H1 (cell line): ENCODE measurements at regions of chr16 and their contacts with region 1.

Region 1: DNA sequence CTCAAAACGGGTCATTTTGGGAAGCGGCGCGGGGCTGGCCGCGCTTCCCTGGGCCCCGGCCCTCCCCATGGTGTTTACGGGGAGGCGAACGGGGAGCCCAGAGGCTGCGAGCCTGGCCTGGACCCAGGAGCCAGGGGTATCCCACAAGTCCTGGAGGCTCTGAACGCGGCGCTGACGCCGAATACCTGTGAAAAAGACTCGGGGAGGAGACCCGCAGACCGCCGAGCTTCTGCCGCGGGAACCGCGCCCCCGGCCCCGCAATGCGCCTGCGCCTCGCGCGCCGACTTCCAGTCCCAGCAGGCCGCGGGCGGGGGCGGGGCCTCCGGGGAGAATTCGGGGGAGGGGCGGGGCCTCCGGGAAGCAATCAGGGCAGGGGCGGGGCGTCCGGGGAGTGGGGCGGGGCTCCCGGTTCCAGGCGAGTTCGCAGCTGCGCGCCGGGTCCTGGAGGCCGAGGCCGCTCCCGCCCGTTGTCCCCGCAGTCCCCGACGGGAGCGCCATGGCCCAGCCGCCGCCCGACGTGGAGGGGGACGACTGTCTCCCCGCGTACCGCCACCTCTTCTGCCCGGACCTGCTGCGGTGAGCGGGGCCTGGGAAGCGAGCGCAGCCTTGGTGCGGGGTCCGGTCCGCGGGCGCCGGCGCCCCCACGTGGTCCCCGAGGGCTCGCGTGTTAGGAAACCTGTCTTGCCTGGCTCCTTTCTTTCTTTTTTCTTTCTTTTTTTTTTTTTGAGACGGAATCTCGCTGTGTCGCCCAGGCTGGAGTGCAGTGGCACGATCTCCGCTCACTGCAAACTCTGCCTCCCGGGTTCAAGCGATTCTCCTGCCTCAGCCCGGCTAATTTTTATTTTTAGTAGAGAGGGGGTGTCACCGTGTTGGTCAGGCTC is at the start of gene DECR2:
- DNase-seq: peak; percentile 68 to 98
- H3K4me3 ChIP-seq: peak within 1 kb of the TSS; percentile 61 to 71 (median 68)
- H3K27ac ChIP-seq: peak within 1 kb of the TSS; percentile 63; the same call in 1 of the 2 replicates
- H3K4me1 ChIP-seq: peaks cover 0 to 20% (median 11%) of the 10 kb centered on the region in 4 experiments; a peak in 6 of 7 replicates
- H3K27me3 ChIP-seq: no peaks in the 10 kb centered on the region
- CTCF ChIP-seq: peak; percentile 9 to 25 (median 12); a peak in 3 of 4 replicates
- EP300 ChIP-seq: no peak
- POLR2A ChIP-seq: peak; percentile 69 to 87
- RAD21 ChIP-seq: peak; percentile 24 to 28; a peak in 3 of 4 replicates
- total RNA-seq, gene DECR2: 28.2 and 30.6 TPM in 2 replicates

Region 2: GRCh38 chr16:352547-353403 is 48.9 kb before region 1 on chr16 and contains the start of gene AXIN1:
- CTCF ChIA-PET with region 1: no interaction called
- POLR2A ChIA-PET with region 1: no interaction called
- DNase-seq: peak; percentile 94 to 100
- H3K4me3 ChIP-seq: peak within 1 kb of the TSS; percentile 63 to 89 (median 74)
- H3K27ac ChIP-seq: no peak within 1 kb of the TSS
- H3K4me1 ChIP-seq: peaks cover 0 to 4% (median 2%) of the 10 kb centered on the region in 4 experiments; a peak in 4 of 7 replicates
- H3K27me3 ChIP-seq: no peaks in the 10 kb centered on the region
- CTCF ChIP-seq: peak; percentile 44 to 64 (median 51)
- EP300 ChIP-seq: no peak
- POLR2A ChIP-seq: peak in 1 of 2 experiments; percentile 44; a peak in 1 of 3 replicates
- RAD21 ChIP-seq: peak; percentile 34 to 62; a peak in 3 of 4 replicates
- total RNA-seq, gene AXIN1: 41.9 and 43.2 TPM in 2 replicates

Region 3: DNA sequence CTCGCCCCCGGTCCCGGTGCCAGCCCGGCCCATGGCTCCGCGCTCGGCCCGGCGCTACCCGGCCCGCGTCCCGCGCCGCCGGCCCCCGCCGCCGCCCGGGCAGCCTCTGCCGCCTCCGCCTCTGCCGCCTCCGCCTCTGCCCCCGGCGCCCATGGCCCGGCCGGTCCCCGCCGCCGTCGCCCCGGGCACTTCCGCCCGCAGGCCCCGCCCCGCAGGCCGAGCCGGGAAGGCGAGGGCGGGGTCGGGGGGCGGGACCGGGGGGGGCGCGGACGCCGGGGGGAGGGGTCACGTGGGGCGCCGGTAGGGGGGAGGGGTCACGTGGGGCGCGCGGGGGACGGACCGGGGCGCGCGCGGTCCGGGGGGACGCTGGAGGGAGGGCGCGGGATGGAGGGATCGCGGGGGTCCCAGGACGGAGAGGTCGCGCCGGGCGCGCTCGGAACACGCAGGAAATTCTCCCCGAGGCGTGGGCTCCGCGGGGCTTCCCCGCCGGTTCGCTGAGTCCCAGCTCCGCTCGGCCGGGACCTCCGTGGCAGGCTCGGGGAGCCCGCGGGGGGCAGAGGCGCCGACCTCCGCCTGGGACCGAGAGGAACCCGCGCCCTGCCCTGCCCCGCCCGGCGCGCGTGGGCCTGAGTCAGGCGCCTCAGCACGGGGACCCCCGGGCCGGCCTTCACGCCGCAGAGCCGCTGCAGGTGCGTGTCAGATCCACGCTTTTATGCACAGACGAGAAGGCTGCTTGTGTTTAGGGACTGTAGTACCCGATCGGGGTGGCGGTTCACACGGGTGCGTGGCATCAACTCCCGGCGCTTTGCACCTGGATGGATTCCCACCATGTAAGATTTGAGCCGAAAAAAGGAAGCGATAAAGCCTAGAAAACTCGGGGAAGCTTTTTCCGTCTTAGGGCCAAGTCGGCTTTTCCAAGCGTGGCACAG is 19.7 kb before region 1 on chr16 and contains the start of gene PGAP6:
- CTCF ChIA-PET with region 1: interaction called, 4 read pairs
- POLR2A ChIA-PET with region 1: interaction called, 67 read pairs
- DNase-seq: peak in 1 of 2 experiments; percentile 70
- H3K4me3 ChIP-seq: peak within 1 kb of the TSS; percentile 59 to 99 (median 82)
- H3K27ac ChIP-seq: peak within 1 kb of the TSS; percentile 37; the same call in 1 of the 2 replicates
- H3K4me1 ChIP-seq: peaks cover 8 to 28% (median 19%) of the 10 kb centered on the region in 4 experiments
- H3K27me3 ChIP-seq: peaks cover 0 to 3% (median under 1%) of the 10 kb centered on the region in 4 experiments; a peak in 2 of 7 replicates
- CTCF ChIP-seq: no peak
- EP300 ChIP-seq: no peak
- POLR2A ChIP-seq: no peak
- RAD21 ChIP-seq: no peak
- total RNA-seq, gene PGAP6: 86.8 and 92.9 TPM in 2 replicates

Region 4: GRCh38 chr16:414395-415169 is 12.9 kb after region 1 on chr16:
- CTCF ChIA-PET with region 1: interaction called, 4 read pairs
- POLR2A ChIA-PET with region 1: interaction called, 13 read pairs
- DNase-seq: no peak
- H3K4me3 ChIP-seq: no peak overlapping the region
- H3K27ac ChIP-seq: no peak overlapping the region
- H3K4me1 ChIP-seq: no peaks in the 10 kb centered on the region
- H3K27me3 ChIP-seq: no peaks in the 10 kb centered on the region
- CTCF ChIP-seq: no peak
- EP300 ChIP-seq: no peak
- POLR2A ChIP-seq: no peak
- RAD21 ChIP-seq: no peak